Vagina (tissue), 2 donors: ENCODE measurements at regions of chr22 and their contacts with region 1.

Region 1: DNA sequence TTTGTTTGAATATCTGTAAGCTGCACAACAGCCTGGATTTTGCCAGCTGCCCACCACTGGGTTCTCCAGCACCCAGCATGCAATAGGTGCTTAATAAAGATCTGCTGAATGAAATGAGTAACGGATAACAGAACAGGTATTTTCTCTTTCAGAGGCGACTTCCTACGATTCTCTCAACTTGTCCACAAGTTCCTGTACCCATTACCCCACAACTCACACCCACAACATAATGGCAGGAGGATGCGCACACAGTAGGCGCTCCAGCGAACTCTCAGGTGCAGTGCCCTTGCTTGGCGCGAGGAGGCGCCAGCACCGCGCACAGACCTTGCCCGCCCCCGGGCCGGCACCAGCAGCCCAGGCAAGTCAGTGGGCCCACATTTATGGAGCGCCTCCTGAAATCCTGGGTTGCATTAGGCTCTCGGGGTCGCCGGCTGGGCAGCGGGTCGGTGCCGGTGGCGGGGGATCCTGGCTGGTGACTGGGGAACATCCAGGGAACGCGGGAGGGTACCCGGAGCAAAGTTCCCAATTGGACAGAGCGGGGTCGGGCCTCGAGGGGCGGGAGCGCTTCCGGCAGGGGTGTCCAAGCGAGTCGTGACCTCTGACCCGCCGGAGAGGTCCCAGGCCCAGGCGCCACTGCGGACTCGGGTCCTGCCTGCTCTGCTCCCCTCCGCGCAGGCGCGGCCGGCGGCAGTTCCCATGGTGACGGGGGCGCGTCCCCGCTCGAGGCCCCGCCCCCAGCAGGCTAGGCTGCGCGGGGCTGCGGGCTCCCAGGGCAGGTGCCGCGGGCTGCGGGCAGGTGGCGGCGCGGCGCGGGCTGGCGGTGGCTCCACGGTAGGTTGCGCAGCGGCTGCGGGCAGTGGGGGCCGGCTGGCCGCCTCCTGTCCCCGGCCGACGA is at the start of gene KIAA1671:
- DNase-seq: no peak
- H3K4me3 ChIP-seq: peak within 1 kb of the TSS; percentile 79 to 81
- H3K27ac ChIP-seq: peak within 1 kb of the TSS; percentile 84
- H3K4me1 ChIP-seq: peaks cover 22% of the 10 kb centered on the region
- H3K27me3 ChIP-seq: no peaks in the 10 kb centered on the region
- CTCF ChIP-seq: peak; percentile 91 to 100 (median 95)
- POLR2A ChIP-seq: peak in 1 of 2 donors; percentile 66
- total RNA-seq, gene KIAA1671: 54.0 TPM

Region 2: DNA sequence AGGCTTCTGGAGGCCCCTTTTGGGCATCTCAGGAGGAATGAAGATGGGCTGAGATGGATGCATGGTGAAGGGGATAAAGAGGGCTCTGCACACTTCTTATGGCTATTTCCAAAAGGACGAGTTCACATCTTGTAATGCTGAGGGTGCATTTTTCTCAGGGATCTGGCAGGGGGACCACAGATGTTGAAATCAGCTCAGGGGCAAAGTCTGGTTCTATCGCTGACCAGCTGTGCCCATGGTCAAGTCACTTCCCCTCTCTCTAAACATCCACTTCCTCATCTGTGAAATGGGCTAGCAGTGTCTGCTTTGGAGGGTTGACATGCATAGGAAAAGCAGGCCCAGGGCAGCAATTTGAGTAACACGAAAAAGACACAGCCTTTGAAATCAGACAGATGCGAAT is 32.2 kb before region 1 on chr22:
- intact Hi-C with region 1: no loop called
- DNase-seq: no peak
- H3K4me3 ChIP-seq: no peak overlapping the region
- H3K27ac ChIP-seq: no peak overlapping the region
- H3K4me1 ChIP-seq: no peaks in the 10 kb centered on the region
- H3K27me3 ChIP-seq: no peaks in the 10 kb centered on the region
- CTCF ChIP-seq: no peak
- POLR2A ChIP-seq: no peak

Region 3: DNA sequence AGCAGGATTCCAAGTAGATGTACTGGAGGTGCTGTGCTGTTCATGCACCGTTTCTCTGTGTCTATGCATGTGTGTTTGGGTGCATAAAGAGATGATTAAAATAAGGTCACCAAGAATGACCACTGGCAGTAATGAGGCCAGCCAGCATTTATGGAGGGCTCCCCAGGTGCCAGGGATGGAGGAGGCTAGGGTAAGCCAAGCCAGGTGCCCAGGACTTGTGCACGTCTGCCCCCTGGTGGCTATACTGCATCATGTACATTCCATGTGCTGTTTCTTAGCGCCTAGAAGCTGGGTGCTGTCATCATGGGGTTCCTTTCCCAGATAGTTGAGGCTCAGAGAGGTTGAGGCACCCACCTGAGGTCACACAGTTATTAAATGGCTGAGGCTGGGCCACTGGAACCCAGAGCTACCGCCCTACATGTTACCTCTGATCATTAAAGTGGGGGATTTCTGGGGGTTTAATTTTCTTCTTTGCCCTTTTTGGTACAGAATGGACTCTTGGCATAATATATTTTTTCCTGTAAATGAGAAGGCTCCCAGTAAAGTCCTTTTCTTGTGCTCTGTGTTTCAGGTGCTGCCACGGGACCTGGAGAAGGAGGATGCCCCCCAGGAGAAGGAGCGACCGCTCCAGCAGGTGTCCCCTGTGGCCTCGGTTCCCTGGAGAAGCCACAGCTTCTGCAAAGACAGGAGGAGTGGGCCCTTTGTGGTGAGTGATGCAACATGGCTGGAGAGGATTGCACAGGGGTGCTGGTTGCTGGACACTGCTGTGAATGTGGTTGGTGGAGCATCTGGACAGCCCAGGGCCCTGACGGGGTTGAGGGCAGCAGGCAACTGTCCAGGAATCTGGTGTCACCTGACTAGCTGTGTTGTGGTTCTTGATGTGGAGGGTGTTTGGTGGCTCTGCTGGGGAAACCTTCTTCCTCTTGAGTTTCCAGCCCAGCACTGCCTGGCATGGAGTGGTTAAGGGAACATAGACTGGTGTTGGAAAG is 96.8 kb after region 1 on chr22:
- intact Hi-C with region 1: loop called (anchors 5 kb)
- DNase-seq: no peak
- H3K4me3 ChIP-seq: no peak overlapping the region
- H3K27ac ChIP-seq: no peak overlapping the region
- H3K4me1 ChIP-seq: peaks cover 12% of the 10 kb centered on the region
- H3K27me3 ChIP-seq: no peaks in the 10 kb centered on the region
- CTCF ChIP-seq: peak; percentile 73 to 96 (median 92)
- POLR2A ChIP-seq: no peak